Psoas muscle (tissue), 8 donors: ENCODE measurements at regions of chr11 and their contacts with region 1.

Region 1: DNA sequence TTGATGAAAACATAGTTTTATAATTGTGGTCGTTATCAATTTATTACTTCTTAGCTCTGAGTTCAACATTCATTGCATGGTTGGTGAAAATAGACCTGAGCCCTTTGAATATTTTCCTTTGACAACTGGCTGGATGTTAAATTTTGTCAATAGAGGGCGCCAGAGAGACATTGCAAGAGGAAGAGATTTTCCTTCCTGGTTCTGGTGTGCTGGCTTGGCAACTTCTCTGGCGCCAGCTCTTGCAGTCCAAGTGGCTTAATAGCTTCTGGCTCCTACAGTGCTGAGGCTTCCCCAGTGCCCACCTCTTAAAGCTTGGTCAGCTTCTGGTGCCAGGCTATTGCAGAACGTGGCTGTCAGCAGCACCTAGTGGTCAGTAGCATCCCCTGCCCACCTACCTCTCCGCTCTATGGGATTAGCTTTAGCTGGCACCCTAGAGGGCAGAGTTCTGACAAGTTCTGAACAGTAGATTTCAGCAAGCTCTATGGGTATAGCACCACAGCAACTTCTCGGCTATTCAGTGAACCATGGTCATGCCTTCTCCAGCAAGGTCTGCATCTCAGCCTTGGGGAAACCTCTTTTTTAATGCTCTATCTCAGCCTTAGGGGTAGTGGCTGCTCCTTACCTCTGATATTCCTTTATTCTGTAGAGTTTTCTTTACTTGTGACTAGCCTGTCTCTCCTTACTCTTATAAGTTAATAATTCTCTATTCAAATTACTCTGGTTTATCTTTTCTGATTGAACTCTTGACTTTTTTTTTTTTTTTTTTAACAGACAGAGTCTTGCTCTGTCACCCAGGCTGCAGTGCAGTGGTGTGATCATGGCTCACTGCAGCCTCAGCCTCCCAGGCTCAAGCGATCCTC is 59.4 kb downstream of the ACER3 start:
- DNase-seq: peak; percentile 62 to 81
- ATAC-seq: peak; percentile 69 to 94 (median 80)
- H3K4me3 ChIP-seq: no peak overlapping the region
- H3K27ac ChIP-seq: no peak overlapping the region
- H3K4me1 ChIP-seq: no peaks in the 10 kb centered on the region
- H3K27me3 ChIP-seq: no peaks in the 10 kb centered on the region
- CTCF ChIP-seq: peak; percentile 91

Region 2: GRCh38 chr11:76734456-76735420 is 185.4 kb before region 1 on chr11:
- intact Hi-C with region 1: loop called (anchors 2 to 10 kb)
- DNase-seq: no peak
- ATAC-seq: peak in 1 of 4 donors; percentile 12
- H3K4me3 ChIP-seq: no peak overlapping the region
- H3K27ac ChIP-seq: no peak overlapping the region
- H3K4me1 ChIP-seq: no peaks in the 10 kb centered on the region
- H3K27me3 ChIP-seq: no peaks in the 10 kb centered on the region
- CTCF ChIP-seq: no peak

Region 3: DNA sequence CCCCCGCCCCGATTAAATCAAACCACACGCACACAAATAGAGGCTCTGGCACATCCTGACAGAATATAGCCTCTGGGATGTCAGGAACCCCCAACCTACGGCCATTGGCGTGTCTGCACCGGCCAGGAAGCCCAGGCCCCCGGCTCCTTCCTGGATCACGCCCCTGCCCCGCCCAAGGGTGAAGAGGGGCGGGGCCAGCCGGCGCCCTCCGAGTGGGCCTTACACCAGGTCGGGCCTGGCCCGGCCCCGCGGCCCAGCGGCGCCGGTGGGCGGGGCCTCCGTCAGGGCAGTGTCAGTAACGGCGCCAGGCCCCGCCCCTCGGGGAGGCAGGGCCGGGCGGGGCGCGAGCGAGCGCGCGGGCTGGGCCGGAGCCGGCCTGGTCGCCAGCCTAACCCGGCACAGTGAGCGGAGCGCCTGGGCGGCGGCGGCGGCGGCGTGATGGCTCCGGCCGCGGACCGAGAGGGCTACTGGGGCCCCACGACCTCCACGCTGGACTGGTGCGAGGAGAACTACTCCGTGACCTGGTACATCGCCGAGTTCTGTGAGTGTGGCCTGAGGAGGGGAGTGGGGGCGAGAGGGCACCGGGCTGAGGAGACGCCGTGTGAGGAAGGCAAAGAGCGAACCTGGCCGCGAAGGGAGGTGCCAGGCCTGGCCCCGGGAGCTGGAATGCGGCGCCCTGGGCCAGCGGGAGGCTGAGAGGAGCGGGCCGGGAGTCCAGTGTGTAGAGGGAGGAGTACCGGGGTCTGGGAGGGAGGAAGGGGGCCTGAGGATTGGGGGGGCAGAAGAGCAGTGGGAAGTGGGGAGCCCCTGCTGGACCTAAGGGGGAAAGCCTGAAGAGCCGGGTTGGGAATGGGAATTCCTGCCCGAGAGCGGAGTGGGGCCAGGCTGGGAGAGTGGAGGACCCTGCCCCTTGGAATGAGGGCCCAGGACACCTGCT is 59.3 kb before region 1 on chr11 and contains the start of gene ACER3:
- intact Hi-C with region 1: loop called in 1 of 2 experiments (anchors 5 kb)
- DNase-seq: peak; percentile 95
- ATAC-seq: peak; percentile 98 to 100 (median 98)
- H3K4me3 ChIP-seq: peak within 1 kb of the TSS; percentile 87
- H3K27ac ChIP-seq: peak within 1 kb of the TSS; percentile 85
- H3K4me1 ChIP-seq: peaks cover 22% of the 10 kb centered on the region
- H3K27me3 ChIP-seq: no peaks in the 10 kb centered on the region
- CTCF ChIP-seq: no peak
- total RNA-seq, gene ACER3: 3.4 to 6.3 (median 5.4) TPM

Region 4: DNA sequence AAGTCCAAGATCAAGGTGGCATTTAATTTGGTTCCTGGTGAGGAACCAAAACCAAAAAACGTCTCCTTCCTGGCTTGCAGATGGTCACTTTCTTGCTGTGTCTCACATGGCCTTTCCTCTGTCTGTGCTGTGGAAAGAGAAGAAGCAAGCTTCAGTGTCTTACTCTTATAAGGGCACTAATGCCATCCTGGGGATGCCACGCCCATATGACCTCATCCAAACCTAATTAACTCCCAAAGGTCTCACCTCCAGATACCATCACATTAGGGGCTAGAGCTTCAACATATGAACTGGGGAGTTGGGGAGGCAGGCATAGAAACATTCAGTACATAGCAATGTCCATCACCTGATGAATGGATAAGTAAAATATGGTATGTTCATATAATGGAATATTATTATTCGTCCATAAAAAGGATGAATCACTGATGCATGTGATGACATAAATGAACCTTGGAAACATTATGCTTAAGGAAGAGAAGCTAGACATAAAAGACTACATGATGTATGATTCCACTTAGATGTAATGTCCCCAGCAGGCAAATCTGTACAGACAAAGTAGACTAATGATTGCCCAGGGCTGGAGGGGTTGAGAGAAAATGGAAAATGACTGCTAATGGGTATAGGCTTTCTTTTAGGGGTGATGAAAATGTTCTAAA is 35.5 kb after region 1 on chr11:
- intact Hi-C with region 1: no loop called
- DNase-seq: no peak
- ATAC-seq: no peak
- H3K4me3 ChIP-seq: no peak overlapping the region
- H3K27ac ChIP-seq: no peak overlapping the region
- H3K4me1 ChIP-seq: no peaks in the 10 kb centered on the region
- H3K27me3 ChIP-seq: no peaks in the 10 kb centered on the region
- CTCF ChIP-seq: no peak

Region 5: GRCh38 chr11:77091146-77091940 is 171.2 kb after region 1 on chr11:
- intact Hi-C with region 1: loop called (anchors 1 to 5 kb)
- DNase-seq: peak; percentile 80 to 87
- ATAC-seq: peak; percentile 85 to 96 (median 90)
- H3K4me3 ChIP-seq: no peak overlapping the region
- H3K27ac ChIP-seq: no peak overlapping the region
- H3K4me1 ChIP-seq: no peaks in the 10 kb centered on the region
- H3K27me3 ChIP-seq: no peaks in the 10 kb centered on the region
- CTCF ChIP-seq: peak; percentile 91